GM12878 (cell line): ENCODE measurements at regions of chr17 and their contacts with region 1.

Region 1: DNA sequence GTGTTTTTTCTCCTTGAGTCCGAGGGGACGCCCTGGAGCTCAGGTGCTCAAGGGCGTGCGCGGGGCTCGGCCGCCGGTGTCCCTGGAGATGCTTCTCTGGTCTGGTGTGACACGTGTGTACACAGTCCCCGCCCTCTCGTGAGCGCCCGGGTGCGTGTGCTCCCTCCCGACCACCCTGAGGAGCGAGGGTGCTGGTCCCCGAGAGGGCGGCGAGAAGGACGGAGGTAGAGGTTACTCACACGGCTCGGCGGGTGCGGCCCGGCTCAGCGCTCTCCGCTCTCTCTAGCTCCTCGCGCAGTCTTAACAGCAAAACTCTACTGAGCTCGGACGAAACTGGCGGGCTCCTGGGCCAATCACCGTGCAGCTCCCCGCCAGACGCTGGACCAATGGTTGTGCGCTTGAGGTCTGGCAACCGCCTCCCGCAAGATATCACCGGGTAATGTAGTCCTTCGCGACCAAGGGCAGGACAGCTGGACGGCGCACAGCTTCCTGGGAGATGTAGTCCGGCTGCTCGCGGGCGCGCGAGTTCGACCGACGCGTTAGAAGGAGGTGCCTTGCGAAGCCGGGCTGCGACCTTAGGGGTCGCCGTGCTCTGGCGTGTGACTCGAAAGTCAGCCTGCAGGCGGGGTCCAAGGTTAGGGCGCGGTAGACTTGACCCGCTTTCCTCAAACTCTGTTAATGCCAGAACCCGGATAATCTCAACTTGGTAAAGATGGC is at the start of gene SLC25A19:
- DNase-seq: peak; percentile 98
- ATAC-seq: peak; percentile 95
- H3K4me3 ChIP-seq: peak within 1 kb of the TSS; percentile 91
- H3K27ac ChIP-seq: peak within 1 kb of the TSS; percentile 83
- H3K4me1 ChIP-seq: peaks cover 34% of the 10 kb centered on the region
- H3K27me3 ChIP-seq: no peaks in the 10 kb centered on the region
- CTCF ChIP-seq: peak; percentile 30 to 60 (median 37); a peak in 4 of 6 replicates
- EP300 ChIP-seq: no peak
- POLR2A ChIP-seq: peak; percentile 97
- RAD21 ChIP-seq: peak; percentile 51
- polyA plus RNA-seq, gene SLC25A19: 32.9 to 43.1 TPM

Region 2: DNA sequence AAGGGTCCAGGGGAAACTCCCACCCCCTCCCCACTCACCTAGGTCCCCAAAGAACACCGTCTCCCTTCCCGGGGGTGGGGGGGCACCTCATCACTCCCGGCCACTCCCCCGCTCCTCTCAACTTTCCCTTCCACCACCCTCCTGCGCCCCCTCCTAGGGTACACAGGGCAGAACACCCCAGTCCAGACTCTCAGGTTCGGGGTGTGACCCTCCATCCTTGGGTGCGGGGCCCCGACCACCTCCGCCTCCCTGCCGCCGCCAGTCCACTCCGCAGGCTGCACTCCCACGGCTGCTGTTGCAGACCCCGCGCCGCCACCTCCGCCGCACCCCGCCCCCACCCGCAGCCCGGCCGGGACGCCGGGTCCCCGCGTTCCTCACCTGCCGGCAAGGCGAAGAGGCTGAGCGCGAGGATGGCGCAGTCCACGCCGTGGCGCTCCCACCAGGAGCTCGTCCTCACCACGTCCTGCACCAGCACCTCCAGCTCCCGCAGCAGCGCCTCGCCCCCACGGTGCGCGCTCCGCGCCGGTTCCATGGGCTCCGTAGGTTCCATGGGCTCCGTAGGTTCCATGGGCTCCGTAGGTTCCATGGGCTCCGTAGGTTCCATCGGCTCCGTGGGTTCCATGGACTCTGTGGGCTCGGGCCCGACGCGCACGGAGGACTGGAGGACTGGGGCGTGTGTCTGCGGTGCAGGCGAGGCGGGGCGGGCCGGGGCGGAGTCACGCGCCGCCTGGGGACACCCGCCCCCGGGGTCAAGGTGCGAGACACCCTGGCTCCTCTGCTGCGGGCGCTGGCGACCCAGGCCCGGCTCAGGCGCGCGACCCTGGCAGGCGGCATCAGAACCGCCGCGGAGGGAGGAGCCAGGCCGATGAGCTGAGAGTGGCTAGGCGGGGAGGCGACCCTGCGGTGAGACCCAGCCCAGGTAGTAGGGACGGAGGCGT is 396.0 kb before region 1 on chr17 and contains the start of gene FADS6:
- CTCF ChIA-PET with region 1: no interaction called
- POLR2A ChIA-PET with region 1: no interaction called
- RAD21 ChIA-PET with region 1: no interaction called
- SMC1A ChIA-PET with region 1: no interaction called
- in situ Hi-C with region 1: no loop called
- intact Hi-C with region 1: no loop called
- DNase-seq: no peak
- ATAC-seq: no peak
- H3K4me3 ChIP-seq: no peak within 1 kb of the TSS
- H3K27ac ChIP-seq: no peak within 1 kb of the TSS
- H3K4me1 ChIP-seq: no peaks in the 10 kb centered on the region
- H3K27me3 ChIP-seq: peaks cover 4 to 9% of the 10 kb centered on the region in 2 experiments
- CTCF ChIP-seq: no peak
- EP300 ChIP-seq: no peak
- POLR2A ChIP-seq: no peak
- RAD21 ChIP-seq: no peak
- polyA plus RNA-seq, gene FADS6: not detected

Region 3: GRCh38 chr17:75271233-75271954 is 17.9 kb before region 1 on chr17:
- CTCF ChIA-PET with region 1: interaction called, 46 read pairs
- POLR2A ChIA-PET with region 1: interaction called, 30 read pairs
- RAD21 ChIA-PET with region 1: interaction called, 68 read pairs
- SMC1A ChIA-PET with region 1: interaction called, 24 read pairs
- in situ Hi-C with region 1: no loop called
- intact Hi-C with region 1: no loop called
- DNase-seq: no peak
- ATAC-seq: peak; percentile 82
- H3K4me3 ChIP-seq: peak overlapping the region; percentile 70
- H3K27ac ChIP-seq: peak overlapping the region; percentile 91
- H3K4me1 ChIP-seq: peaks cover 24% of the 10 kb centered on the region
- H3K27me3 ChIP-seq: no peaks in the 10 kb centered on the region
- CTCF ChIP-seq: peak; percentile 66 to 87 (median 79); a peak in 4 of 6 replicates
- EP300 ChIP-seq: no peak
- POLR2A ChIP-seq: peak; percentile 79
- RAD21 ChIP-seq: peak; percentile 40; the same call in 1 of the 2 replicates

Region 4: GRCh38 chr17:75338335-75338734 is 49.1 kb after region 1 on chr17:
- CTCF ChIA-PET with region 1: interaction called, 10 read pairs
- POLR2A ChIA-PET with region 1: interaction called, 5 read pairs
- RAD21 ChIA-PET with region 1: interaction called, 35 read pairs
- SMC1A ChIA-PET with region 1: interaction called, 10 read pairs
- in situ Hi-C with region 1: no loop called
- intact Hi-C with region 1: no loop called
- DNase-seq: no peak
- ATAC-seq: peak; percentile 28
- H3K4me3 ChIP-seq: peak overlapping the region; percentile 40; the same call in 1 of the 2 replicates
- H3K27ac ChIP-seq: peak overlapping the region; percentile 36
- H3K4me1 ChIP-seq: peaks cover 44% of the 10 kb centered on the region
- H3K27me3 ChIP-seq: no peaks in the 10 kb centered on the region
- CTCF ChIP-seq: no peak
- EP300 ChIP-seq: no peak
- POLR2A ChIP-seq: no peak
- RAD21 ChIP-seq: no peak

Region 5: DNA sequence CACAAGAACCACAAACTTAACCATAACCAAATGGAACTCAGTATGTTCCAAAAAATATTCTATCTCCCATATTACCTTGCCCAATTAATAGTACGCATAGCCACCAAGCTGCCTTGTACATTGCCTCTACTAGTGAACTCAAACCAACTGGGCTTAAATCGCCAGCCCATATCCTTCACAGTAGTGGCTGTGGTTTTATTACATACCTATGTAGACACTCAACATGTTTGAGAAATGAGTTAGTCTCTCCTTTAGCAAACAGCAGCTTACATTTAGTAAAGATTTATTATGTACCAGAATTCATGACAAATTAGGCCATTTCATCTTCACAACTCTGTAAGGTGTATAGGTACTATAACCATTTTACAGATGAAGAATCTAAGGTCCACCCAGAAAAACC is 74.8 kb after region 1 on chr17:
- CTCF ChIA-PET with region 1: interaction called, 5 read pairs
- POLR2A ChIA-PET with region 1: interaction called, 8 read pairs
- RAD21 ChIA-PET with region 1: interaction called, 16 read pairs
- SMC1A ChIA-PET with region 1: interaction called, 6 read pairs
- in situ Hi-C with region 1: no loop called
- intact Hi-C with region 1: no loop called
- DNase-seq: no peak
- ATAC-seq: no peak
- H3K4me3 ChIP-seq: no peak overlapping the region
- H3K27ac ChIP-seq: peak overlapping the region; percentile 54; the same call in 1 of the 2 replicates
- H3K4me1 ChIP-seq: peaks cover 64% of the 10 kb centered on the region
- H3K27me3 ChIP-seq: no peaks in the 10 kb centered on the region
- CTCF ChIP-seq: no peak
- EP300 ChIP-seq: no peak
- POLR2A ChIP-seq: no peak
- RAD21 ChIP-seq: no peak

Region 6: GRCh38 chr17:75393523-75394331 is 104.5 kb after region 1 on chr17:
- CTCF ChIA-PET with region 1: interaction called, 22 read pairs
- POLR2A ChIA-PET with region 1: interaction called, 16 read pairs
- RAD21 ChIA-PET with region 1: interaction called, 22 read pairs
- SMC1A ChIA-PET with region 1: interaction called, 18 read pairs
- in situ Hi-C with region 1: no loop called
- intact Hi-C with region 1: no loop called
- DNase-seq: peak; percentile 79
- ATAC-seq: peak; percentile 95
- H3K4me3 ChIP-seq: peak overlapping the region; percentile 77
- H3K27ac ChIP-seq: peak overlapping the region; percentile 57
- H3K4me1 ChIP-seq: peaks cover 21% of the 10 kb centered on the region
- H3K27me3 ChIP-seq: no peaks in the 10 kb centered on the region
- CTCF ChIP-seq: 0 out of 6 replicates have a peak, but pooled peaks of 1 of the 3 experiments have one; percentile 3
- EP300 ChIP-seq: no peak
- POLR2A ChIP-seq: peak; percentile 51; the same call in 1 of the 2 replicates
- RAD21 ChIP-seq: no peak

Region 7: GRCh38 chr17:75405365-75406221 is 116.3 kb after region 1 on chr17 and contains the start of gene GRB2:
- CTCF ChIA-PET with region 1: interaction called, 65 read pairs
- POLR2A ChIA-PET with region 1: interaction called, 10 read pairs
- RAD21 ChIA-PET with region 1: interaction called, 37 read pairs
- SMC1A ChIA-PET with region 1: interaction called, 12 read pairs
- in situ Hi-C with region 1: no loop called
- intact Hi-C with region 1: loop called (anchors 2 kb)
- DNase-seq: peak; percentile 83
- ATAC-seq: peak; percentile 82
- H3K4me3 ChIP-seq: peak within 1 kb of the TSS; percentile 87
- H3K27ac ChIP-seq: peak within 1 kb of the TSS; percentile 91
- H3K4me1 ChIP-seq: peaks cover 16% of the 10 kb centered on the region
- H3K27me3 ChIP-seq: no peaks in the 10 kb centered on the region
- CTCF ChIP-seq: no peak
- EP300 ChIP-seq: peak in 1 of 2 experiments; percentile 30; a peak in 1 of 4 replicates
- POLR2A ChIP-seq: peak; percentile 98
- RAD21 ChIP-seq: no peak
- polyA plus RNA-seq, gene GRB2: 113 to 152 TPM

Region 8: GRCh38 chr17:75456417-75457046 is 167.3 kb after region 1 on chr17 and contains the start of gene TMEM94:
- CTCF ChIA-PET with region 1: interaction called, 12 read pairs
- POLR2A ChIA-PET with region 1: interaction called, 4 read pairs
- RAD21 ChIA-PET with region 1: interaction called, 12 read pairs
- SMC1A ChIA-PET with region 1: interaction called, 3 read pairs
- in situ Hi-C with region 1: no loop called
- intact Hi-C with region 1: no loop called
- DNase-seq: peak; percentile 92
- ATAC-seq: peak; percentile 91
- H3K4me3 ChIP-seq: peak within 1 kb of the TSS; percentile 86
- H3K27ac ChIP-seq: peak within 1 kb of the TSS; percentile 84
- H3K4me1 ChIP-seq: peaks cover 41% of the 10 kb centered on the region
- H3K27me3 ChIP-seq: no peaks in the 10 kb centered on the region
- CTCF ChIP-seq: no peak
- EP300 ChIP-seq: no peak
- POLR2A ChIP-seq: peak; percentile 72
- RAD21 ChIP-seq: no peak
- polyA plus RNA-seq, gene TMEM94: 0.31 to 2.3 TPM

Region 9: GRCh38 chr17:75504347-75504964 is 215.2 kb after region 1 on chr17:
- CTCF ChIA-PET with region 1: no interaction called
- POLR2A ChIA-PET with region 1: no interaction called
- RAD21 ChIA-PET with region 1: no interaction called
- SMC1A ChIA-PET with region 1: no interaction called
- in situ Hi-C with region 1: no loop called
- intact Hi-C with region 1: no loop called
- DNase-seq: no peak
- ATAC-seq: peak; percentile 90
- H3K4me3 ChIP-seq: no peak overlapping the region
- H3K27ac ChIP-seq: no peak overlapping the region
- H3K4me1 ChIP-seq: no peaks in the 10 kb centered on the region
- H3K27me3 ChIP-seq: no peaks in the 10 kb centered on the region
- CTCF ChIP-seq: peak; percentile 68 to 78 (median 76)
- EP300 ChIP-seq: no peak
- POLR2A ChIP-seq: no peak
- RAD21 ChIP-seq: peak; percentile 53